Psoas muscle (tissue), 8 donors: ENCODE measurements at regions of chr12 and their contacts with region 1.

Region 1: DNA sequence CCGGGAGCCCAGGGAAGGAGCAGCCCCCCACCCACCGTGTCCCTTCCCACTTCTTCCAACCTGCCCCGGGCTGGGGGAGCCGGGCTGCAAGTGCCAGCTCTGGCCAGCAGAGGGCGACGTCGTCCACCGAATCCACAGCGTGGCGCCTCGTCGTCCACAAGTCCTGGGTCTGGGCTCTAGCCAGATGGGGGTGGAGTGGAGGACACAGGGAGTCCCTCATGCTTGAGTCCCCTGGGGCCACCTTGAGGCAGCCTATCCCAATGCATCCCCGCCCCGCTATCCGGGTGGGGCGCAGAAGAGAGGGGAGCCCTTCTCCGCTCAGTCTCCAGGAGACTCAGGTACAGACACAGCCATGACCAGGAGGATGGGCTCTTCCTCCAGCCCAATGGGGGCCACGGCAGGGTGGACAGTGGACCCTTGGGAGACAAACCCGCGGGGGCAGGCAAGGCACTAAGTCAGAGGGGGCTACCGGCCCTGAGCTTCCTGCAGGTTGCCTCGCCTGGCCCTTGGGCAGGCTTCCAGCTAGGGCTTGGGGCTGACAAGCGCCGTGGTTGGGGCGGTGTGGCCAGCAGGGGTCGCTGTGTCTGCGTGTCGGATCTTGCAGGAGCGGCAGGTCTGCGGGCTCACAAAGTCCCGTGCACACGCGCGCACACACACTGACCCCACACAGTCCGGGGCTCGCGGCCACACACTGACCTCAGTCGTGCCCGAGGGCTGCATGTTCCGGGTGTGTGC is 5.5 kb downstream of the AQP5 start:
- DNase-seq: peak; percentile 89 to 92
- ATAC-seq: peak; percentile 85 to 93 (median 89)
- H3K4me3 ChIP-seq: peak overlapping the region; percentile 53
- H3K27ac ChIP-seq: no peak overlapping the region
- H3K4me1 ChIP-seq: peaks cover 4% of the 10 kb centered on the region
- H3K27me3 ChIP-seq: peaks cover 0 to 52% (median 1%) of the 10 kb centered on the region in 3 donors
- CTCF ChIP-seq: peak; percentile 83

Region 2: GRCh38 chr12:49776413-49776812 is 190.8 kb before region 1 on chr12:
- intact Hi-C with region 1: loop called in 1 of 2 experiments (anchors 5 kb)
- DNase-seq: peak; percentile 72 to 85
- ATAC-seq: peak; percentile 90 to 97 (median 94)
- H3K4me3 ChIP-seq: peak overlapping the region; percentile 14
- H3K27ac ChIP-seq: no peak overlapping the region
- H3K4me1 ChIP-seq: peaks cover 5% of the 10 kb centered on the region
- H3K27me3 ChIP-seq: no peaks in the 10 kb centered on the region
- CTCF ChIP-seq: peak; percentile 84

Region 3: DNA sequence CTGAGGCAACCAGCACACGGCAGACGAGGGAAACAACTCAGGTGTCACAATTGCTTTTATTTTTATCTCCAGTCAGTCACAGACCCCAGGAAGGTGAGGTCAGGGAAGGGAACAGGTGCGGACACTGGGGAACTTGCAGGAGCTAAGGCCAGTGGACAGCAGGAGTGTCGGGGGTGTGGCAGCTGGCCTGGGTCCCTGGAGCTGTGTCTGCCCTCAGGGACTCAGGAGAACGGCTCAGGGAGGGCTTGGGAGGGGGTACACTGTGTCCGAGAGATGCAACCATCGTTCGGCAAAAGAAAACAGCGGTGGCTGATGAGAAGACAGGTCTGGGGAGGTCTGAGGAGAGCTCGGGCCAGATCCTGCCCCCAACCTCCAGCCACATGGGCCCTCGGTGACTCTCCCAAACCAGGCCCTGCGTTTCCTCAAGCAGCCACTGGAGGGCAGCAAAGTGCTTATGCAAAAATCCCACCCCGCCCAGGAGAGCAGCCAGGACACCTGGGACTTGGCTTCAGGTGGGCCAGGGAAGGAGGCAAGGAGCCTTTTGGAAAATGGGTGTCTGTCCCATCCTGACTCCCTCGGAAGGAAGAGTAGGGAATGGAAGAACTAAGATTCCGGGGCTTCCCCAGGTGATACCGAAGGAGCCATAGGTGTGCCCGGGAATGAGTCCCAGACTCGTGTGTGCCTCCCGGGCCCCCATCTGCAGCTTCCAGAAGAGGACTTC is 100.2 kb before region 1 on chr12:
- intact Hi-C with region 1: loop called in 1 of 2 experiments (anchors 5 kb)
- DNase-seq: peak; percentile 74 to 85
- ATAC-seq: peak; percentile 58 to 79 (median 72)
- H3K4me3 ChIP-seq: no peak overlapping the region
- H3K27ac ChIP-seq: no peak overlapping the region
- H3K4me1 ChIP-seq: peaks cover 17% of the 10 kb centered on the region
- H3K27me3 ChIP-seq: no peaks in the 10 kb centered on the region
- CTCF ChIP-seq: peak; percentile 96

Region 4: GRCh38 chr12:49877066-49877465 is 90.1 kb before region 1 on chr12:
- intact Hi-C with region 1: no loop called
- DNase-seq: no peak
- ATAC-seq: no peak
- H3K4me3 ChIP-seq: no peak overlapping the region
- H3K27ac ChIP-seq: no peak overlapping the region
- H3K4me1 ChIP-seq: no peaks in the 10 kb centered on the region
- H3K27me3 ChIP-seq: no peaks in the 10 kb centered on the region
- CTCF ChIP-seq: no peak

Region 5: DNA sequence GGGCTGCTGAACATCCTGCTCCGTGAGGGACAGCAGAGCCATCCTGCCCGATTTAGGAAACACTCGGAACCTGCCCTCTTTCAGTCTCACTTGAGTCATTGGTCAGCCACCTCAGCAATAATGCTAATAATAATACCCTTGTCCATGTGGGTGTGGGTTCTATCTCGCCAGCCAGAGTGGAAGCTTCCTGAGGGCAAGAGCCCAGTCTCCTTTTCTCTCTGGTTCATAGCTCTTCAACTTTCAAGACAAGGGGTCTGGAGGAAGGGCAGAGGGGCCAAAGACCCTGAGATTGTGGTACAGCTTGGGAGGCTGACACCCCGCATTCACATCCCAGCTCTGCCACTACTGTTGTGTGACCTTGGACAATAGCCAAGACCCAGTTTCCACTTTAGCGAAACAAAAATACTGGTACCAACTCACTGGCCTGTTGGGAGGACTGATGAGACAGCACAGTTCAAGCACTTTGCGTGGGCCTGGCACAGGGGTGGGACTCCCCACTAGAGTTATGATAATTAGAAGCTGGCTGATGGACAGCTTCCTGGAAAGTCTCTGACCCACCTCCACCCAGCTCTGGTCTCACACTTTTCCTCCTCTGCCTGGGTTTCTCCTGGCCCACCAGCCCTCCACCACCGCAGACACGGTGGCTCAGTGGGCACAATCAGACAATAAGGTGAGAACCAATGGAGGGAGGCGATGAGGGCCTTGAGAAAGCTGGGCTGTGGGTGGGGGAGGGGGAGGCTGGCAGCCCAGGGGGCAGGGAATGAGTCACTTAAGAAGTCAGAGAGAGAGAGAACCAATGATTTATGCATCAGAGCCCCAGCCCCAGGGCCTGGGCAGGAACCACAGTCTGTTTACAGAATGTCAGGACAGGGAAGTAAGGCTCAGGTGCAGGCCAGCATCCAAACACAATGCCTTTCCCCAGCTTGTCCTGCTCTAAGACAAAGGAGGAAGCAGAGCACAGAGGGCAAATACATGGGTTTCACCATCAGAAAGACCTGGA is 73.2 kb before region 1 on chr12:
- intact Hi-C with region 1: no loop called
- DNase-seq: peak in 1 of 2 donors; percentile 15
- ATAC-seq: no peak
- H3K4me3 ChIP-seq: no peak overlapping the region
- H3K27ac ChIP-seq: no peak overlapping the region
- H3K4me1 ChIP-seq: no peaks in the 10 kb centered on the region
- H3K27me3 ChIP-seq: peaks cover 0 to 2% (median 0%) of the 10 kb centered on the region in 3 donors
- CTCF ChIP-seq: no peak

Region 6: GRCh38 chr12:50062728-50063460 is 95.7 kb after region 1 on chr12:
- intact Hi-C with region 1: loop called (anchors 2 to 5 kb)
- DNase-seq: peak in 1 of 2 donors; percentile 20
- ATAC-seq: no peak
- H3K4me3 ChIP-seq: no peak overlapping the region
- H3K27ac ChIP-seq: no peak overlapping the region
- H3K4me1 ChIP-seq: no peaks in the 10 kb centered on the region
- H3K27me3 ChIP-seq: peaks cover 0 to 6% (median 0%) of the 10 kb centered on the region in 3 donors
- CTCF ChIP-seq: no peak

Region 7: GRCh38 chr12:50074936-50075807 is 108.0 kb after region 1 on chr12:
- intact Hi-C with region 1: loop called (anchors 1 to 5 kb)
- DNase-seq: peak; percentile 85 to 92
- ATAC-seq: peak; percentile 92 to 95 (median 95)
- H3K4me3 ChIP-seq: no peak overlapping the region
- H3K27ac ChIP-seq: no peak overlapping the region
- H3K4me1 ChIP-seq: peaks cover 4% of the 10 kb centered on the region
- H3K27me3 ChIP-seq: no peaks in the 10 kb centered on the region
- CTCF ChIP-seq: peak; percentile 95

Region 8: GRCh38 chr12:50167041-50167828 is 200.0 kb after region 1 on chr12 and contains the start of gene CERS5:
- intact Hi-C with region 1: loop called (anchors 10 kb)
- DNase-seq: peak; percentile 99
- ATAC-seq: peak; percentile 99
- H3K4me3 ChIP-seq: peak within 1 kb of the TSS; percentile 89
- H3K27ac ChIP-seq: peak within 1 kb of the TSS; percentile 81
- H3K4me1 ChIP-seq: no peaks in the 10 kb centered on the region
- H3K27me3 ChIP-seq: no peaks in the 10 kb centered on the region
- CTCF ChIP-seq: peak; percentile 37
- total RNA-seq, gene CERS5: 5.2 to 10.7 (median 6.6) TPM